ENCODE measurements at regions of chr3 and their contacts with region 1.

Region 1: DNA sequence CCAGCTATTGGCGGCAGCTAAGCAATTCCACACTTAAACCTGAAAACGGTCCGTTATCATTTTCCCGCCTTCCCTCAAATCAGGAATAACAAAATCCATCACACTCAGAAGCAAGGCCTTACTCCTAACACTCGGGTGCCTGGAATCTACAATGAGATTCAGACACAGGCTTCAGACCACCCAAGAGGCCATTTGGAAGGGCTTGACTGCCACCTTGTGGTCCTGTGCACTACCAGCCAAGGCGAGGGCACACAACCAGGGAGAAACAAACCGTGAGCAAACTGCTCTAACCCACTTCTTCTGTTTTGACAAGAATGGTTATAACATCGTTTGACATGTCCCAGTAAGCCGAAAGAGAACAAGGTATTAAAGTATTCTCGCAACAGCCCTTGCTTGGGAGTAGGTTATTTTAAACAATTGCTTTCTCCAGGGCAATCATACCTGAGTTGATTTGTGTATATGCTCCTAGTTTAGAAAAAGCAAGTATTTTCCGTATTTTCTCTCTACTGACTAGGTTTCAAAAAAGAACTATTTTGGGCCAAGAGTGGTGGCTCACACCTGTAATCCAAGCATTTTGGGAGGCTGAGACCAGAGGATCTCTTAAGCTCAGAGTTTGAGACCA is 40.1 kb upstream of the TAFA4 start:
- DNase-seq: peak; percentile 80 to 86
- H3K4me3 ChIP-seq: no peak overlapping the region
- H3K4me1 ChIP-seq: peaks cover 7% of the 10 kb centered on the region
- H3K27me3 ChIP-seq: no peaks in the 10 kb centered on the region; the same call in 1 of the 2 replicates

Region 2: DNA sequence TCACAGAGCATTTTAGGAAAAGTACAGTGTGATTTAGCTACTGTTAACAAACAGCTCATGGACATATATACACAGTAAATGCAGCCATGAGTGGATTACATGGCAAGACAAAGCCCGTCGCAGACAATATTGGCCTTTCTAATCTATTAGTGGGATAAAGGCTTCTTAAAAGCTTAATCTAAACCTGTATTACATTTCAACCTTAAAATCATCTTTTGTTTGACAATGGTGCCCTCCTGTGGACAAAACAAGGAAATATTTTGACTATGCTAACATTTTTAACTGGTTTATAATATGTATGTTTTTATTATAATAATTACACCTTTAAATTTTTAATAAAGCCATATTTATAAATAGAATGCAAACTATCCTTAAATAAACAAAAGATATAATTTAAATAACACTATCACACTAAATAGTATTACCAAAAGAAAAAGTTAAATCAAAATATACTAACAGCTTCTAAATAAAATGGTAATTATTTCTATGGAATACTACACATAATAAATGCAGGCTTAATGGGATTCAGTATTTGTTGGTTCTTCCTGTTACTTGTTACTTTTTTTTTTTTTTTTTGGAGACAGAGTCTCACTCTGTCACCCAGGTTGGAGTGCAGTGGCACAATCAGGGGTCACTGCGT is 78.7 kb before region 1 on chr3:
- in situ Hi-C with region 1: loop called (anchors 5 kb)
- DNase-seq: peak; percentile 24 to 54
- H3K4me3 ChIP-seq: no peak overlapping the region
- H3K4me1 ChIP-seq: no peaks in the 10 kb centered on the region
- H3K27me3 ChIP-seq: peaks cover 26% of the 10 kb centered on the region

Region 3: GRCh38 chr3:69872783-69873378 is 900.4 kb after region 1 on chr3:
- in situ Hi-C with region 1: no loop called
- DNase-seq: no peak
- H3K4me3 ChIP-seq: no peak overlapping the region
- H3K4me1 ChIP-seq: no peaks in the 10 kb centered on the region
- H3K27me3 ChIP-seq: no peaks in the 10 kb centered on the region